ENCODE measurements at regions of chr2 and their contacts with region 1.

Region 1: GRCh38 chr2:188369365-188369764 is 77.7 kb downstream of the GULP1 start:
- DNase-seq: peak; percentile 73
- H3K4me3 Mint-ChIP-seq: no peak overlapping the region
- H3K27ac Mint-ChIP-seq: no peak overlapping the region
- H3K4me1 Mint-ChIP-seq: no peaks in the 10 kb centered on the region
- H3K27me3 Mint-ChIP-seq: no peaks in the 10 kb centered on the region
- CTCF ChIP-seq: peak; percentile 59

Region 2: DNA sequence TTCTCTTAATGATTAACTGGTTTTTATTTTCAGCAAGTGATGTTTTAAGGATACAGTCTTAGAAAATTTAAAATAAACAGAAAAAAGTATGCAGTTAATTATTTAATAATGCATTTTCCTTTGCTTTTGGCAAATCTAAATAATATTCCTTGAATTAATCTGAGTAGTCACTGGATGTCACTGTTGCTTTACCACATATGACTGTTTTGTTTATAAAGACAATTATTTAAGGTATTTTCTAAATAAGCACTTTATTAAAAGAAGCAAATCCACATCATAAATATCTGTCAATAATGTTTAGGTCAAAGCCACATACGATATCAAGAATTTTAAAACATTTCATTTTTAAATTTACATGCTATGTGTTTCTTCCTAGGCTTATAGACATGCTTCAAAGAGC is 774.6 kb before region 1 on chr2:
- CTCF ChIA-PET with region 1: interaction called, 5 read pairs
- POLR2A ChIA-PET with region 1: no interaction called
- intact Hi-C with region 1: loop called (anchors 5 kb)
- DNase-seq: no peak
- H3K4me3 Mint-ChIP-seq: no peak overlapping the region
- H3K27ac Mint-ChIP-seq: no peak overlapping the region
- H3K4me1 Mint-ChIP-seq: peaks cover 6% of the 10 kb centered on the region
- H3K27me3 Mint-ChIP-seq: no peaks in the 10 kb centered on the region
- CTCF ChIP-seq: peak; percentile 31

Region 3: GRCh38 chr2:187842978-187843847 is 526.2 kb before region 1 on chr2:
- CTCF ChIA-PET with region 1: interaction called, 6 read pairs
- POLR2A ChIA-PET with region 1: interaction called, 3 read pairs
- intact Hi-C with region 1: loop called (anchors 1 kb)
- DNase-seq: peak; percentile 74
- H3K4me3 Mint-ChIP-seq: no peak overlapping the region
- H3K27ac Mint-ChIP-seq: no peak overlapping the region
- H3K4me1 Mint-ChIP-seq: no peaks in the 10 kb centered on the region
- H3K27me3 Mint-ChIP-seq: no peaks in the 10 kb centered on the region
- CTCF ChIP-seq: peak; percentile 56

Region 4: DNA sequence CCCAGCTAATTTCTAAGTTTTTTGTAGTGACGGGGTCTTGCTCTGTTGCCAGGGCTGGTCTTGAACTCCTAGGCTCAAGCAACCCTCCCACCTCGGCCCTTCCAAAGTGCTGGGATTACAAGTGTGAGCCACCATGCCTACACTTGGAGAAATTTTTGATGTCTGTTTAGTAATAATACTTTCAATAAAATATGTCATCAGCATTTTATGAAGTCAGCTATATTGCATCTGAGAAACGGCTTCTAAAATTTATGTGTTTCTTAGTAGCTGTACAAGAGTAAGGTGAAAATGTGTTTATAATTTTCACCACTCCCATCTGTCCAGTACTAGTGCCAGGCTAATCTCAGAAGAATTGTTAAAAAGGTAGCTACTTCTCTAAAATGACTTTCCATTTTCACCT is 30.9 kb before region 1 on chr2:
- CTCF ChIA-PET with region 1: interaction called, 14 read pairs
- POLR2A ChIA-PET with region 1: no interaction called
- intact Hi-C with region 1: no loop called
- DNase-seq: no peak
- H3K4me3 Mint-ChIP-seq: no peak overlapping the region
- H3K27ac Mint-ChIP-seq: no peak overlapping the region
- H3K4me1 Mint-ChIP-seq: no peaks in the 10 kb centered on the region
- H3K27me3 Mint-ChIP-seq: no peaks in the 10 kb centered on the region
- CTCF ChIP-seq: no peak

Region 5: GRCh38 chr2:188381614-188382013 is 12.2 kb after region 1 on chr2:
- CTCF ChIA-PET with region 1: interaction called, 10 read pairs
- POLR2A ChIA-PET with region 1: no interaction called
- intact Hi-C with region 1: no loop called
- DNase-seq: peak; percentile 55
- H3K4me3 Mint-ChIP-seq: no peak overlapping the region
- H3K27ac Mint-ChIP-seq: peak overlapping the region; percentile 19
- H3K4me1 Mint-ChIP-seq: peaks cover 17% of the 10 kb centered on the region
- H3K27me3 Mint-ChIP-seq: no peaks in the 10 kb centered on the region
- CTCF ChIP-seq: no peak

Region 6: GRCh38 chr2:188512456-188512855 is 143.1 kb after region 1 on chr2:
- CTCF ChIA-PET with region 1: interaction called, 3 read pairs
- POLR2A ChIA-PET with region 1: no interaction called
- intact Hi-C with region 1: loop called (anchors 1 kb)
- DNase-seq: peak; percentile 54
- H3K4me3 Mint-ChIP-seq: no peak overlapping the region
- H3K27ac Mint-ChIP-seq: no peak overlapping the region
- H3K4me1 Mint-ChIP-seq: no peaks in the 10 kb centered on the region
- H3K27me3 Mint-ChIP-seq: no peaks in the 10 kb centered on the region
- CTCF ChIP-seq: peak; percentile 62

Measured in MCF 10A (cell line).